Aorta (tissue), 5 donors: ENCODE measurements at regions of chr17 and their contacts with region 1.

Region 1: GRCh38 chr17:20315821-20316220 is 151.5 kb downstream of the LGALS9B start:
- DNase-seq: no peak
- ATAC-seq: no peak
- H3K4me3 ChIP-seq: no peak overlapping the region
- H3K27ac ChIP-seq: no peak overlapping the region
- H3K4me1 ChIP-seq: no peaks in the 10 kb centered on the region
- H3K27me3 ChIP-seq: no peaks in the 10 kb centered on the region

Region 2: DNA sequence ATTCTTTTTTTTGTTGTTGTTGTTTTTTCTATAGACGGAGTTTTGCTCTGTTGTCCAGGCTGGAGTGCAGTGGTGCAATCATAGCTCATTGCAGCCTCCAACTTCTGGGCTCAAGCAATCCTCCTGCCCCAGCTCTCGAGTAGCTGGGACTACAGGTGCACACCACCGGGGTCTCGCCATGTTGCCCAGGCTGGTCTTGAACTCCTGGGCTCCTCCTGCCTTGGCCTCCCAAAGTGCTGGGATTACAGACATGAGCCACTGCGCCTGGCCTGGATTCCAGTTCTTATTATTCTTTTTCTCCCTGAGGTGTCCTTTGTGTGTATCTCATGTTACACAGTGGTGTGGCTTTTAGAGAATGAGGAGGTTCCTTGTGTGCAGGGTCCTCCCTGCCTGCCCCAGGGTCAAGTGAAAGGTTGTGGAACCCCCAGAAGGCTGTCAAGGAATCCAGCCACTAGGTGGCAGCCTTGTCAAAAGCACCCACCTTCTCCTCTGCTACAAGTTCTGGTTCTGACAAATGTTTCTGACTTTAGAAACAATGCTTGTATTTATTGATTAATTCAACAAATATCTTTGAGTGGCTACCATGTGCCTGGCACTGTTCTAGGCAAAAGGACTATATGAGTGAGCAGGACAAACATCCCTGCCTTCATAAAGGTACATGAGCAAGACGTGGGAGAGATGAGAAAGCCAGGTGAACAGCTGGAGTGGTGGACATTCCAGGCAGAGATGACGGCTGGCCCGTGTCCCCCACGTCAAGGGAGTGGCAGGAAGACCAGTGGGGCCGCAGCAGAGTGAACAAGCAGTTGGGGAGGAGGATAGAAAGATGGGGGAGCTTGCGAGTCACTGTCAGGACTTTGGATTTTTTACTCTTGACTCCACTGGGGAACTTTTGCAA is 194.2 kb before region 1 on chr17:
- intact Hi-C with region 1: loop called (anchors 5 kb)
- DNase-seq: peak; percentile 77 to 82
- ATAC-seq: peak; percentile 73
- H3K4me3 ChIP-seq: no peak overlapping the region
- H3K27ac ChIP-seq: peak overlapping the region in 1 of 2 donors; percentile 48
- H3K4me1 ChIP-seq: no peaks in the 10 kb centered on the region
- H3K27me3 ChIP-seq: no peaks in the 10 kb centered on the region

Region 3: DNA sequence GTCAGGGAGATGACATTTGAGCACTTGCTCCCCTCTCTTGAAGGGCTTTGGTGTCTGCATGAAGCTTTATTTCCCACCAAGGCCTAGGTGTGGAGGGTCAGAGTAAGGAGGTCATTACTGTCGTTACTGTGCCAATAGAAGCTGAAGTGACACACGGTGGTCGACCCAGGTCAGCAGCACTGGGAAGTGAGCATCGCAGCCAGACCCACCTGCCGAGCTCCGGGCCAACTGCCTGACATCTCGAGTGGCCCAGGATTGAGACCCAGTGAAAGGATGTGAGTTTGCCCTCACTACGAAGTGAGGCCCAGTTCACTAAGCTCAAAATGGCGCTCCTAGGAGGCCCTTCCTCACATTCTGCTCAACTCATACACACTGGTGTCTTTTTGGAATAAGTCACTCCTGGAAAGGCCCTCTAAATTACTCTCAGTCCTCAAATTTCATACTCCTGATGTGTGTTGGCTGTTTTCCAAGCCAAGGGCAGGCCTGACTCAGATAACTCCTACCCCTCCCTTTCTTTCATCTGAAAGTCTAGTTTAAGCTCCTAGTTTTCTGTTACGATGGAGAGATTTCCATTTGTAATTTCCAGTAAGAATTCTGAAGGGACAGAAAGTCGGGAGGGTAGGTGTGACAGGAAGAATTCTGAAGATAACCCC is 48.9 kb before region 1 on chr17:
- intact Hi-C with region 1: no loop called
- DNase-seq: no peak
- ATAC-seq: no peak
- H3K4me3 ChIP-seq: no peak overlapping the region
- H3K27ac ChIP-seq: peak overlapping the region; percentile 57 to 86
- H3K4me1 ChIP-seq: peaks cover 2 to 3% of the 10 kb centered on the region in 2 donors
- H3K27me3 ChIP-seq: no peaks in the 10 kb centered on the region